ENCODE measurements at regions of chr7 and their contacts with region 1.

Region 1: GRCh38 chr7:94087664-94088352 is 83.7 kb upstream of the BET1 start:
- DNase-seq: peak; percentile 85
- ATAC-seq: peak; percentile 83
- H3K4me3 ChIP-seq: peak overlapping the region; percentile 11 to 66 (median 42)
- H3K4me3 Mint-ChIP-seq: peak overlapping the region; percentile 78
- H3K27ac ChIP-seq: peak overlapping the region; percentile 28 to 51
- H3K27ac Mint-ChIP-seq: peak overlapping the region; percentile 79
- H3K4me1 ChIP-seq: peaks cover 14% of the 10 kb centered on the region in 2 donors
- H3K4me1 Mint-ChIP-seq: peaks cover 17% of the 10 kb centered on the region
- H3K27me3 ChIP-seq: no peaks in the 10 kb centered on the region
- H3K27me3 Mint-ChIP-seq: no peaks in the 10 kb centered on the region
- CTCF ChIP-seq: peak; percentile 87

Region 2: DNA sequence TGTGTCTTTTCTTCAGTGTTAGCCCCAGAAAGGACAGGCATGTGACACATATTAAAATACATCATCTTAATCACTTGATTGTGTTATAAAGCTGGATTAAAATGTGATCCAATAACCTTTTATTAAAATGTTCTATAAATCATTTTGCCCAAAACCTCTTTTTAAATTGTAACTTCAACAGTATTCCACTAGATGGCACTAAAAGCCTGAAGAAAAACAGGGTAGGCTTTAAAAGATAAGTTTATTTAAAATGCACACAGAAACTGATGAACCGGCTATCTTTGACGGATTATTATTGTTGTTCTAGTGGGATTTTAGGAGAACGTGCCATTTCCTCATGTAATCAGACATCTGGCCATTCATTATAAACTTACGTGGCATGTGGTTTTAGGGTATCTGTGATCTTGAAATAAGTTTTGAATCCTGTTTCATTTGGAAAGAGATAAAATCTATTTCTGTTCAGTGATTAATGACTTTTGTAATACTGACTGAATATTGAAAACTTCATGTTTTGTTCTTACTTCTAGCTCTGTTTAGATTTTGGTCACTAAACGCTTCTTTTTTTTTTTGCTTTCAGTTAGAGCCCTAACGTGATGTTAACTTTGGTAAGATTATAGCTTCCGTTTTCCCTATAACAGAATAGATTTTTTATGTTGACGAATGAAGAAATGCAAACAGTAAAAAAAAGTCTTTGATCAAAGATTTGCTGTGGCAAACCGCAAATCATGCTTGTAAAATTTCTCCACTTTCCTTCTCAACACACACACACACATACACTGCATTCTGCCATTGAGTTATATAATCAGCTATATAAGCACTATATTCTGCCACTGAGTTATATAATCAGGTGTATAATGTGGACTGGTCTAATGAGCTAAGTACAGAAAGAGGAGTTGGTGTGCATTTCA is 842.0 kb before region 1 on chr7:
- CTCF ChIA-PET with region 1: interaction called, 4 read pairs
- POLR2A ChIA-PET with region 1: no interaction called
- intact Hi-C with region 1: loop called (anchors 2 kb)
- DNase-seq: peak; percentile 54
- ATAC-seq: peak; percentile 28
- H3K4me3 ChIP-seq: no peak overlapping the region
- H3K4me3 Mint-ChIP-seq: no peak overlapping the region
- H3K27ac ChIP-seq: no peak overlapping the region
- H3K27ac Mint-ChIP-seq: no peak overlapping the region
- H3K4me1 ChIP-seq: no peaks in the 10 kb centered on the region
- H3K4me1 Mint-ChIP-seq: peaks cover 6% of the 10 kb centered on the region
- H3K27me3 ChIP-seq: no peaks in the 10 kb centered on the region
- H3K27me3 Mint-ChIP-seq: no peaks in the 10 kb centered on the region
- CTCF ChIP-seq: peak; percentile 86

Region 3: GRCh38 chr7:93799750-93800357 is 288.0 kb before region 1 on chr7:
- CTCF ChIA-PET with region 1: interaction called, 3 read pairs
- POLR2A ChIA-PET with region 1: no interaction called
- intact Hi-C with region 1: loop called (anchors 5 kb)
- DNase-seq: peak; percentile 6
- ATAC-seq: no peak
- H3K4me3 ChIP-seq: no peak overlapping the region
- H3K4me3 Mint-ChIP-seq: no peak overlapping the region
- H3K27ac ChIP-seq: no peak overlapping the region
- H3K27ac Mint-ChIP-seq: no peak overlapping the region
- H3K4me1 ChIP-seq: no peaks in the 10 kb centered on the region
- H3K4me1 Mint-ChIP-seq: no peaks in the 10 kb centered on the region
- H3K27me3 ChIP-seq: no peaks in the 10 kb centered on the region
- H3K27me3 Mint-ChIP-seq: no peaks in the 10 kb centered on the region
- CTCF ChIP-seq: no peak

Region 4: GRCh38 chr7:93910076-93910994 is 177.5 kb before region 1 on chr7:
- CTCF ChIA-PET with region 1: interaction called, 10 read pairs
- POLR2A ChIA-PET with region 1: no interaction called
- intact Hi-C with region 1: no loop called
- DNase-seq: no peak
- ATAC-seq: no peak
- H3K4me3 ChIP-seq: no peak overlapping the region
- H3K4me3 Mint-ChIP-seq: no peak overlapping the region
- H3K27ac ChIP-seq: no peak overlapping the region
- H3K27ac Mint-ChIP-seq: no peak overlapping the region
- H3K4me1 ChIP-seq: no peaks in the 10 kb centered on the region
- H3K4me1 Mint-ChIP-seq: peaks cover 2% of the 10 kb centered on the region
- H3K27me3 ChIP-seq: no peaks in the 10 kb centered on the region
- H3K27me3 Mint-ChIP-seq: no peaks in the 10 kb centered on the region
- CTCF ChIP-seq: no peak

Region 5: GRCh38 chr7:94042381-94042780 is 45.4 kb before region 1 on chr7:
- CTCF ChIA-PET with region 1: interaction called, 11 read pairs
- POLR2A ChIA-PET with region 1: no interaction called
- intact Hi-C with region 1: loop called (anchors 10 kb)
- DNase-seq: peak; percentile 36
- ATAC-seq: peak; percentile 84
- H3K4me3 ChIP-seq: no peak overlapping the region
- H3K4me3 Mint-ChIP-seq: no peak overlapping the region
- H3K27ac ChIP-seq: no peak overlapping the region
- H3K27ac Mint-ChIP-seq: no peak overlapping the region
- H3K4me1 ChIP-seq: peaks cover 18 to 24% of the 10 kb centered on the region in 2 donors
- H3K4me1 Mint-ChIP-seq: peaks cover 39% of the 10 kb centered on the region
- H3K27me3 ChIP-seq: no peaks in the 10 kb centered on the region
- H3K27me3 Mint-ChIP-seq: no peaks in the 10 kb centered on the region
- CTCF ChIP-seq: no peak

Region 6: GRCh38 chr7:94160719-94161435 is 73.1 kb after region 1 on chr7:
- CTCF ChIA-PET with region 1: interaction called, 5 read pairs
- POLR2A ChIA-PET with region 1: no interaction called
- intact Hi-C with region 1: loop called (anchors 2 kb)
- DNase-seq: peak; percentile 79
- ATAC-seq: peak; percentile 82
- H3K4me3 ChIP-seq: peak overlapping the region; percentile 1 to 52 (median 33)
- H3K4me3 Mint-ChIP-seq: peak overlapping the region; percentile 84
- H3K27ac ChIP-seq: peak overlapping the region; percentile 73 to 90
- H3K27ac Mint-ChIP-seq: peak overlapping the region; percentile 93
- H3K4me1 ChIP-seq: peaks cover 25 to 29% of the 10 kb centered on the region in 2 donors
- H3K4me1 Mint-ChIP-seq: peaks cover 49% of the 10 kb centered on the region
- H3K27me3 ChIP-seq: no peaks in the 10 kb centered on the region
- H3K27me3 Mint-ChIP-seq: no peaks in the 10 kb centered on the region
- CTCF ChIP-seq: no peak

Region 7: DNA sequence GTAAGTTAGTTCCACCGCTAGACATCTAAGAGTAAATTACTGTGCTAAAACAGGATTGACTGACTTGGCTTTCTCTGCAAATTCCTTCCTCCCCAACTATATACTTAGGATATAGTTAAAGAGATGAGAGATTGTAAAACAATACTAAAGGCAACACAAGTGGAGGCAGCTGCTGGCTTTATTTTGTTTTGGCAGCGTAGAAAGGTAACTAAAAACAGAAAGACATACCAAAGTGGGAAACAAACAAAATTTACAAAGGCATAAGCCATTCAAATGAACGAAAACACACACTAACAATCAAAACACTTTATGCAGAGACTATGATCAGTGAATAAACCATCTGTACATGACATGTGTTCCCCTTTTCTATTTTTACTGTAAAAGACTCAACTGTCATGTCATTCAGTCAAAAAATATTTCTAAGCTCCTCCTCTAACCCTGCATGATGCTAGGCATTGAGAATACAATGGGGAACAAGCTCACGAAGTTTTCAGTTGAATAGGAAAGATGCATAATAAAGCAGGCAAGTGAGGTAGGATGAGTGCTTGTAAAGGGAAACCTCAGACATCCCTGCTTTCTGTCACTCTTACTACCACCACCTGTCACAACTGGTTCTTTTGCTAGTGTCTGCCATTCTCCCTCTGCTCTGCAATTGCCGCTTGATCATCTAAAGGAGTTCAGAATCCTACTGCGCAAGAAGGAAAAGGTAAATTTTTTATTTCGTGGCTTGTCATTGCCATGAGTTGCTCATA is 242.6 kb after region 1 on chr7:
- CTCF ChIA-PET with region 1: no interaction called
- POLR2A ChIA-PET with region 1: no interaction called
- intact Hi-C with region 1: no loop called
- DNase-seq: no peak
- ATAC-seq: no peak
- H3K4me3 ChIP-seq: no peak overlapping the region
- H3K4me3 Mint-ChIP-seq: no peak overlapping the region
- H3K27ac ChIP-seq: no peak overlapping the region
- H3K27ac Mint-ChIP-seq: no peak overlapping the region
- H3K4me1 ChIP-seq: no peaks in the 10 kb centered on the region
- H3K4me1 Mint-ChIP-seq: no peaks in the 10 kb centered on the region
- H3K27me3 ChIP-seq: no peaks in the 10 kb centered on the region
- H3K27me3 Mint-ChIP-seq: peaks cover 8% of the 10 kb centered on the region
- CTCF ChIP-seq: no peak

Region 8: DNA sequence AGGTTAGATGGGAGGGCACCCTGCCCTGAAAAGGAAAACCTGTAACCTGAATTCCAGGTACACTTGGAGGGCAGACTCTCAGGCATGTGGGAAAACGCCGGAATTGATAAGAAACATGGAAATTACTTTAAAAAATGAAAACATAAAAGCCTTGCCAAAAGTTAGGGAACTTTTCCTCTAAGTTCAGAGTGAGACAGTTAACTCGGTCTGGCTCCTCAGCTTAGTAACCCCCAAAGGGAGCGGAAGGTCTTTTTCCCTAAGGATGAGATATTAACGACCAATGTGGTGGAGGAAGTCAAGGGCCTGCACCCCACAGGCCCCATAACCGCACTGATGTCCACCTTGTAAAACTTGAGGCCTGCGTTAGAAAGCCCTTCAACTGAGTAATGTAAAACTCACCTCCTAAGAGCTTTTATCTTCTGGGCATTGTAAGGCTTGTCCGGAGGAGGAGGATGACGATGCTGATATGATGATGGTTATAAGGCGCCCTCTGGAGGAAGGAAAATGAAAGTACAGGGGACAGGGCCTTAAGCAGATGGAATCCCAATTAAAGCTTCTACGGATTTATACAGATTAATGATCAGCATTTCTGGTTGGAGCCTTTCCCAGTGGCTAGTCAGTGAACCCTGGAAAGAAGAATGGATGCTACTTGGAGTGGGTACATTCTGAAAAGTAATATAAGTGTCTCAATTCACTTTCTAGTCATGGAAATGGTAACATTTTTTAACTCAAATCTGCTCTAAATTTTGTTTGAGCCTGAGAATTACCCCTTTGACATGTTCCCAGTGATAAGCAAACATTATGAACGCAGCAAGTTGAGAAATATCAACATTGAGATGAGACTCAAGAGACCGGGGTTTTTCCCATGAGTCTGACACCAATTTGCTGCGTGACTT is 307.6 kb after region 1 on chr7:
- CTCF ChIA-PET with region 1: interaction called, 9 read pairs
- POLR2A ChIA-PET with region 1: no interaction called
- intact Hi-C with region 1: loop called (anchors 10 kb)
- DNase-seq: peak; percentile 77
- ATAC-seq: peak; percentile 79
- H3K4me3 ChIP-seq: peak overlapping the region in 3 of 5 experiments; percentile 40 to 66 (median 50)
- H3K4me3 Mint-ChIP-seq: peak overlapping the region; percentile 75
- H3K27ac ChIP-seq: no peak overlapping the region
- H3K27ac Mint-ChIP-seq: no peak overlapping the region
- H3K4me1 ChIP-seq: peaks cover 15 to 16% of the 10 kb centered on the region in 2 donors
- H3K4me1 Mint-ChIP-seq: peaks cover 10% of the 10 kb centered on the region
- H3K27me3 ChIP-seq: peaks cover 0 to 29% (median 8%) of the 10 kb centered on the region in 4 experiments
- H3K27me3 Mint-ChIP-seq: peaks cover 37% of the 10 kb centered on the region
- CTCF ChIP-seq: peak; percentile 86

Measured in B cell (primary cell).